GM18951 (cell line): ENCODE measurements at regions of chr12 and their contacts with region 1.

Region 1: DNA sequence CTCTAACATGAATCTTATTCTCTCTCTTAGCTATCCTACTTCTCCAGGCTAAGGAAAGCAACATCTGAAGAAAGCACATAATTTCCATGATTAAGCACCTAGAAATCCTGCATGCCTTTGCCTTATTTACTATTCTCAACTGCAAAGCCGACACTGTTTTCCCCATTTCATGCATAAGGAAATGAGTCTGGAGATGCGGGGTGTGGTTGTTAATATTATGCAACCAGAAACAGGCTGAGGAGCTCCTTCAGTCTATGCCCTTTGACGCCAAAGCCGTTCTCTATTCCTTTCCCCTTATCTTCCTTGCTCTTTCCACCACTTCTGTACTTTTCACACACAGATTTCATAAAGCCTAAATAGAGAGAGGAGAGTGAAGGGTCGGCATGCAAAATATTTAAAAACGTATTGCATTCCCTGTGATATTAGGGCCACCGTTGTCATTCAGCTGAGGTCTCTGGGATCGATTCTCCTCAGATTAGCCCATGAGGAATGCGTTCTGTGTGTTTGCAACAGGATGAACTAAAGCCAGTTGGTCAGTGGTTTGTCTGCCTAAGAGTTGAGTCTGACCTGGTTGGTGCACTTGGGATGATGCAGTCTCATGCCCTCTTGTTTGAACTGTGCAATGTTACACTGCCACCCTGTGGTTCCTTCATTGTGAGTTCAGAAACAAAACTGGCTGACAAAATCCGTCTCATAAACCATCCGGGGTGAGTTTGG is 53.1 kb upstream of the PLEKHG7 start:
- POLR2A ChIP-seq: no peak

Region 2: DNA sequence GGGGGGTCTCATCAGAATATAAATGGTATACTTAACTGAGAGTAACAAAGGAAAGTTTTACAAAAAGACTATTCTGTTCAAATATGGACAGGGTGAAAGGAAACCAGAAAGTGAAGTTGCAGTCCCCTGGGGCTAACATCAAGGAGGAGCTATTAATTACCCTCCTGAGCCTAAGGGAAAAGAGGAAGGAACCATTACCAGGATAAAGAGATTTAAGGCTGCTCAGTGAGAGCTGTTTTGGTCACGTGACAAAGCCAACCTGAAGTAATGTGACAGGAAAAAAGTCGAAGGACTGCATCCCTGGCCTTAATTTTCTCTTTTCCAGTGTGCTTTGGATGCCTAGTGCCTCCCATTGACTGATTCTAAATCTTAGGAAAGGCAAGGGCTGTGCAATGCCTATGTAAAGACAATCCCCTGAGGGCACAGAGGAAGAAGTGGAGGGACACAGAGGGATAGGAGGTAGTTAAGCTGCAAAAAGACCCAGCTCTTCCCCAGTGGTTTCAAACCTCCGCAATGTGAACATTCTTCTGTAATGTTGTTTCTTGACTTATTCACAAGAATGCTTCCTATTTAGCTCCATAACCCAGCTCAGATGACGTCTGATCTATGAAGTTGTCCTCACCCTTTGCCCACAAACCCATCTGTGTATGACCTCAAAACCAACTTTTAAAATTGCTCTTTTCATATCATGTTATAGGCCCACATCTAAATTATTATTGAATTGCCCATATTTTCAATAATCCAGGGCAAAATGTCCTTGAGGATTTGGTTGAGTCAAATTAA is 1279.4 kb before region 1 on chr12:
- in situ Hi-C with region 1: loop called (anchors 10 kb)
- POLR2A ChIP-seq: no peak

Region 3: DNA sequence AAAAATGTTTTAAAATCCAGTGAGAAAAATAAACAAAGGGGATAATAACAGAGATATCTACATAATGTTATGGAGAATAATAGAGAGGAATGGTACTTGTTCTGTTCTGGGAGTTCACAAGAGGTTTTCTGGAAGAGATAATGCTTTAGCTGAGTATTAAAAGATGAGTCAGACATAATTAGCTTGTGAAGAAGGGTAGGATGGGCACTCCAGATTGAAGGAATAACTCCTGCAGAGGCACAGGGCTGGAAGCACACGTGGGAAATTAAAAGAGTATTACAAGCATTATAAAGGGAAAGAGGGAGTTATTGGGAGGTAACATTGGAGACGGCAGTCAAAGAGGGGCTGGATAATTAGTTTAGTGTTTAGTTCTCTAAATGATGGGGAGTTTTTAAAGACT is 379.1 kb before region 1 on chr12:
- in situ Hi-C with region 1: no loop called
- POLR2A ChIP-seq: no peak